ENCODE measurements at regions of chr14 and their contacts with region 1.

Region 1: DNA sequence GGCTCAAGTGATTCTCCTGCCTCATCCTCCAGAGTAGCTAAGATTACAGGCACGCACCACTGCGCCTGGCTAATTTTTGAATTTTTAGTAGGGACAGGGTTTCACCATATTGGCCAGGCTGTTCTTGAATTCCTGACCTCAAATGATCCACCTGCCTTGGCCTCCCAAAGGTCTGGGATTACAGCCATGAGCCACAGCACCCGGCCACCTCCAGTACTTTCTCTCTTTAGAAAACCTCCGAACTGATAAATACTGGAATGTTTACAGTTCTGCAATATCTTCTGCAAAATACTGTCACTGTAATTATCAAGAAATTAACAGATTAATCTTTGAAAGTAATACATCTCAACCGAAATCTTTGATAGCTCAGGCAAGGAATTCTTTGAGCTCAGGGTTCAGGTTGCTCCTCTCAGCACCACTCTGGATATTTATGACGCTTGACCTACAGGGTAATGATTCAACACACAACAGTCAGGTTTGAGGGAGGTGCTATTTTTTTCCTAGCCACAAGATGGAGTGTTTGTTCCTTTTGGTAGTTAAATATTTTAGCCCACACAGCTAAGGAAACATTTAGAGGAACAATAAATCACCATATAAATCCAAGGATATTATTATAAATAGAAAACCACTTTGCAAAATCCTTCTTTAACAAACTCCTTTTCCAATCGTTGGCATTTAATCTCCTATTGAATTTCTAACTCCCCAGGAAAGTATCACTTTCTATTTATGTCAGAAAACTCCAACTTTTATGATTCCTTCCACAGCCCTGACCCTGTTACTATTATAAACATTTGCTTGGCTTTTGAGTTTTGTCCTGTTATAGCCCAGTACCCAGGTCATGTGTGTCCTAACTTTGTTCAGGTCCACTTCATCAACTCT is 48.6 kb upstream of the GTF2A1 start:
- DNase-seq: peak; percentile 53
- H3K4me3 Mint-ChIP-seq: no peak overlapping the region
- H3K27ac Mint-ChIP-seq: no peak overlapping the region
- H3K4me1 Mint-ChIP-seq: no peaks in the 10 kb centered on the region
- H3K27me3 Mint-ChIP-seq: no peaks in the 10 kb centered on the region
- CTCF ChIP-seq: peak; percentile 37

Region 2: DNA sequence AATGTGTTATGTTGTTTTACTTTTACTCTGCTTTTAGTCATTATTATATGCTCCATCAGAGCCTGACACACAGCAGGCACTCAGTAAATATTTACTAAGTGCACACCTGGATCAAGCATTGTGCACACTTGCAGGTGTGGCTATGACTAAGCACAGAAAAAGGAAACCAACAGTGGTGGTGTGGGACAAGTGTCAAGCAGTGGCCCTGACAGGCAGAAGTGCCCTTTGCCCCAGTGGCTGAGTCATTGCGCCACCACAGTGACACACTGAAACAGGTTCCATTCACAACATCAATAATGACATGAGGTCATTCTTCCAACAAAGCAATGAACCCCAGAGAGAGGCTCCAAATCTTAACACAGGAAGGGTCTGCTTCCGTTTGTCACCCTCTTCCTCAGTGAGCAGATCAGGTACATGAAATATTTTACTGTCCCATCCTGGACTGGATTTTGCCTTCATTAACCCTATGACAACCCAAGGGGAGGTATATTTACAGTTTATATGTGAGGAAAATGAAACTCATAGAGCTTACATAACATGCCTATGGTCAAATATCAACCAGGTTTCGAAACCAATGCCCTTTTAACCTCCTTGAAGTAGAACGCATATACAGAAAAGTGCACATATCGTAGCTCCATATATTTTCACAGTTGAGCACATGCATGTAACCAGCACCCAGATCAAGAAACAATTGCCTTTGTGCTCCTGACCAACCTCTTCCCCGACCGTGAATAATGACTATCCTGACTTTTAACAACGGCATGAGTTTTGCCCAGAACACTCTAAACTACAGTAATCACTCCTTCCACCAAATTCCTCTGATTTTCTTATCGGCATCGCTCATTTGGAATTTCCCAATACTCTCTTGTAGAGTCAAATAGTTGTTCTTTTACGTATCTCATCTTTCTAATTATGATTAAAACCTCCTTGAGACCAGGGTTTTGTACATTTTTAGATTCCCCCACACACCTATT is 34.2 kb after region 1 on chr14:
- CTCF ChIA-PET with region 1: interaction called, 3 read pairs
- intact Hi-C with region 1: loop called (anchors 2 kb)
- DNase-seq: peak; percentile 93
- H3K4me3 Mint-ChIP-seq: peak overlapping the region; percentile 36
- H3K27ac Mint-ChIP-seq: peak overlapping the region; percentile 72
- H3K4me1 Mint-ChIP-seq: peaks cover 42% of the 10 kb centered on the region
- H3K27me3 Mint-ChIP-seq: no peaks in the 10 kb centered on the region
- CTCF ChIP-seq: no peak

Region 3: DNA sequence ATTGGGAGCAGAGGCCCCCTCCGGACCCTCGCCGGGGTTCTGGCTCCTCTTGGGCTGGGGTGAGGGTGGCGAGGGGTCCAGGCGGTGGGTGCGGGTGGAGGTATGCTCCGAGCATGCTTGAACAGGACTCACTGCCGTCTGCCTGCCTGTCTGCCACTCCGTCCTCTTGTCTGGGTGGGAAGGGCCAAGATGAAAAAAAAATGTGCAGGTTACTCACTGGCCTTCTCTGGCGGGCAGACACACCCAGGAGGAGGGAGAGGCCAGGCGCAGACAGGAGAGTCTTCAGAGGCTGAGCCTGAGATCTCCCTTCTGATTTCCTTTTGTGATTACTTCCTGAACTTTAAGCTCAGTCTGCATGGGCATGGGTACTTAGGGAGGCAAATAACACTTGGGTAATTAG is 54.7 kb after region 1 on chr14:
- CTCF ChIA-PET with region 1: no interaction called
- intact Hi-C with region 1: loop called (anchors 5 kb)
- DNase-seq: peak; percentile 73
- H3K4me3 Mint-ChIP-seq: peak overlapping the region; percentile 73
- H3K27ac Mint-ChIP-seq: peak overlapping the region; percentile 66
- H3K4me1 Mint-ChIP-seq: peaks cover 48% of the 10 kb centered on the region
- H3K27me3 Mint-ChIP-seq: no peaks in the 10 kb centered on the region
- CTCF ChIP-seq: no peak

Region 4: DNA sequence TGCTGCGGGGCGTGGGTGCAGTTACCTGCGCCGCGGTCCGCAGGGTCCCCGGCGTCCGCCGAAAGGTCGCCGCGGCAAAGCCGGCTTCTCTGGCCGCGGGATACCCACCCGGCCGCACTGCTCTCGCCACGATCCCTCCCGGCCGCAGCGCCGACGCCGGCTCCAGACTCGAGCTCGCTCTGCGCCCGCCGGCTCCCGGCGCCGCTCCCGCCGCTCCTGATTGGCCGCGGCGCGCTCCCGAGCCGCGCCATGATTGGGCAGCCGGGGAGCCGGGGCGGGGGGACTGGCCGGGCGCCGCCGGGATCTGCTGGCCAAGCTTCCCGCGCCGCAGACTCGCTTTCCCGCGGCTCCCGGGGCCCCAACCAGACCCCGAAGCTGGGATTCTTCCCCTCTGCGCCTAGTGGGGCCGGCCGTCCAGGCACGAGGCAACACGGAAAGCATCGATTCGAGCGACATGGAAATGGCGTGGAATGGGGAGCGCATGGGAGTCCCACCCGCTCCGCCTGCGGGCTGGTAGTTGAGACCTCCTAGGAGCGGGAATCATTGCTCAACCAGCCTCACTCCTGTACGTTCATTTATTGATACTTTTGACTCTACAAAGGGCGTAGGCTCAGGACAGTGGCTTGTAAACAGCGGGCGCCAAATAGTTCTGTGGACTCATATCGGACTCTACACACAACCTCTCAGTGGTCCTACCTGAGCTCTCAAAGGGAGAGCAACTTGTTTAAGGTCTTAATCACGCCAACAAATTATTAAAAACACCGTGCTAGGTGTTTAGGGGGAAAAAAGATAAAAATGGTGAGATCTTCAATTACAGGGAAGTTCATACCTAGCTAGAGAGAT is 167.2 kb after region 1 on chr14:
- CTCF ChIA-PET with region 1: interaction called, 3 read pairs
- intact Hi-C with region 1: loop called (anchors 1 kb)
- DNase-seq: peak; percentile 87
- H3K4me3 Mint-ChIP-seq: peak overlapping the region; percentile 84
- H3K27ac Mint-ChIP-seq: no peak overlapping the region
- H3K4me1 Mint-ChIP-seq: peaks cover 16% of the 10 kb centered on the region
- H3K27me3 Mint-ChIP-seq: peaks cover 46% of the 10 kb centered on the region
- CTCF ChIP-seq: no peak

Region 5: GRCh38 chr14:81453166-81453766 is 183.9 kb after region 1 on chr14:
- CTCF ChIA-PET with region 1: interaction called, 22 read pairs
- intact Hi-C with region 1: loop called (anchors 1 kb)
- DNase-seq: peak; percentile 64
- H3K4me3 Mint-ChIP-seq: no peak overlapping the region
- H3K27ac Mint-ChIP-seq: no peak overlapping the region
- H3K4me1 Mint-ChIP-seq: no peaks in the 10 kb centered on the region
- H3K27me3 Mint-ChIP-seq: no peaks in the 10 kb centered on the region
- CTCF ChIP-seq: peak; percentile 72

Region 6: GRCh38 chr14:81464247-81465002 is 195.1 kb after region 1 on chr14:
- CTCF ChIA-PET with region 1: interaction called, 10 read pairs
- intact Hi-C with region 1: loop called (anchors 1 kb)
- DNase-seq: peak; percentile 65
- H3K4me3 Mint-ChIP-seq: peak overlapping the region; percentile 10
- H3K27ac Mint-ChIP-seq: no peak overlapping the region
- H3K4me1 Mint-ChIP-seq: no peaks in the 10 kb centered on the region
- H3K27me3 Mint-ChIP-seq: no peaks in the 10 kb centered on the region
- CTCF ChIP-seq: peak; percentile 28

Measured in Calu3 (cell line).